Heart right ventricle (tissue), 16 donors: ENCODE measurements at regions of chr12 and their contacts with region 1.

Region 1: DNA sequence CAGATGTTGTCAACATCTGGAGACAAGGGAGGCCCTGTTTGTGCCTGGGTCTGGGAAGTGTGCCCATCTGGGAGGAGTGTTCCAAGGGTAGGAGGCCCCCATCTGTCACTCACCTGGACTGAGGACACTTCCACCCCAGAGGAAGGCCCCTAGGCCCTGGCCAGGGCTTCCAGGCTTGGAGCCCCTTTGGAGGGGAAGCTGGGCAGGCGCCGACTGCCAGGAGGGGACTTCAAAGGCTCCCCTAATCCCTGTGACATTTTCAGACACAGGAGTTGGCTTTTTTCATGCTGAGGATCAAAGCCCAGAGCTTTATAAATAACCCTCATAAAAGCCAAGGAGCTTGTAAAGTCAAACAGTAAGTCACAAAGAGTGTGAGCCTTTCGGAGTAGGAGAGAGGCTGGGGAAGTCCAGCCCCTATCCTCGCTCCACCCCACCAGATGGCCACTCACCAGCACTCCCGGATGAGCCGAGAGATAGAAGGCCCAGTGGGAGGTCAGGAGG is 17.6 kb upstream of the FAM222A start:
- DNase-seq: no peak
- ATAC-seq: peak in 4 of 8 donors; percentile 37 to 77 (median 50)
- H3K4me3 ChIP-seq: no peak overlapping the region
- H3K27ac ChIP-seq: no peak overlapping the region
- H3K4me1 ChIP-seq: peaks cover 0 to 6% (median 0%) of the 10 kb centered on the region in 9 donors
- H3K27me3 ChIP-seq: peaks cover 0 to 10% (median 0%) of the 10 kb centered on the region in 7 donors
- CTCF ChIP-seq: no peak

Region 2: GRCh38 chr12:109612975-109613502 is 83.0 kb before region 1 on chr12:
- intact Hi-C with region 1: loop called in 1 of 10 experiments (anchors 10 kb)
- DNase-seq: no peak
- ATAC-seq: no peak
- H3K4me3 ChIP-seq: no peak overlapping the region
- H3K27ac ChIP-seq: no peak overlapping the region
- H3K4me1 ChIP-seq: no peaks in the 10 kb centered on the region
- H3K27me3 ChIP-seq: peaks cover 0 to 44% (median 19%) of the 10 kb centered on the region in 7 donors
- CTCF ChIP-seq: peak in 3 of 9 donors; percentile 8 to 26 (median 11)

Region 3: GRCh38 chr12:109625131-109625559 is 70.9 kb before region 1 on chr12:
- intact Hi-C with region 1: no loop called
- DNase-seq: peak in 1 of 2 donors; percentile 40
- ATAC-seq: peak; percentile 25 to 88 (median 80)
- H3K4me3 ChIP-seq: no peak overlapping the region
- H3K27ac ChIP-seq: no peak overlapping the region
- H3K4me1 ChIP-seq: peaks cover 0 to 5% (median 0%) of the 10 kb centered on the region in 9 donors
- H3K27me3 ChIP-seq: peaks cover 0 to 24% (median 6%) of the 10 kb centered on the region in 7 donors
- CTCF ChIP-seq: peak in 1 of 9 donors; percentile 6

Region 4: DNA sequence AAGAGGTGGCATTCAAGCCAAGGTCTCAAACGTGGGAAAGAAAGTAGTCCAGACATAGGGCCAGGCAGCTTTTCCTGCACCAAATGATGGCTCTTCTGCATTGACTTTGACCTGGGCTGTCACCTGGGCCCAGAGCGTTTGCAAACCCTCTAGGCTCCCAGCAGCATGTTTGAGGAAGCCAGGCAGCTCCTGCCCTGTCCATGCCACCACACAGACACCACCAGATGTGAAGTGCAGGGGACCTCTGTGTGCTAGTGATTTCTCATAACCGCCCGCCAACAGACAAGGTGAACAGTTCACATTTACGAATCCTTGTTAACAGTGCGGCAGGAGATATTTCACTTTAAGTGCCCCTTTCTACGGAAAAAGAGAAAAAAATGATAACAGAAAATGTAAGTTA is 32.2 kb before region 1 on chr12:
- intact Hi-C with region 1: no loop called
- DNase-seq: no peak
- ATAC-seq: no peak
- H3K4me3 ChIP-seq: no peak overlapping the region
- H3K27ac ChIP-seq: no peak overlapping the region
- H3K4me1 ChIP-seq: no peaks in the 10 kb centered on the region
- H3K27me3 ChIP-seq: peaks cover 0 to 20% (median 13%) of the 10 kb centered on the region in 7 donors
- CTCF ChIP-seq: no peak